ENCODE measurements at regions of chr3 and their contacts with region 1.

Region 1: GRCh38 chr3:187679638-187680396 is 9.6 kb upstream of the SST start:
- DNase-seq: peak; percentile 76 to 79
- H3K4me3 ChIP-seq: no peak overlapping the region
- H3K27ac ChIP-seq: no peak overlapping the region
- H3K4me1 ChIP-seq: no peaks in the 10 kb centered on the region
- H3K27me3 ChIP-seq: no peaks in the 10 kb centered on the region
- CTCF ChIP-seq: peak; percentile 85 to 89 (median 86)
- POLR2A ChIP-seq: no peak

Region 2: DNA sequence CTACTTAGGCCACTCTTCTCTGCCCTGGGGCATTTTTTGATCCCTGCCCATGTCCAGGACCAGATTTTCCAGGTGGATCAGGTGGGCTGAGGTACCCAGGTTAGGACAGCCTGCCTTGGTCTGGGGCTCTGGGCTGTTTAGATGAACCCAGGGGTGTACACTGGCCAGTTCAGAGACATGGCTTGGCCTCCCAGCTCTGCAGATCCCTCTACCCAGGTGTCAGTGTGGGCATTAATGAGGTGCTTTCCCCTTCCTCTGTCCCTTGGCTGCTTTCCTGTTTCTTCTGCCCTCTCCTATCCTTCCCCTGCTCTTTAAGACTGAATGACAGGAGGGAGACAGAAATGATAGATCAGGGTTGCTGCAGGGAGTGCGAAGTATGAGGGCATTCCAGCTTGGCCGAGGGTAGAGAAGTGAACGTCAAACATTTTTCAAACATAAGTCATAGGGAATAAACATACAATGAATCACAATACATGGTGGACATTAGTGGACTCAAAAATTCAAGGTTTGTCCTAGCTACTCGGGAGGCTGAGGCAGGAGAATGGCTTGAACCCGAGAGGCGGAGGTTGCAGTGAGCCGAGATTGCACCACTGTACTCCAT is 452.1 kb before region 1 on chr3:
- intact Hi-C with region 1: loop called (anchors 10 kb)
- DNase-seq: no peak
- H3K4me3 ChIP-seq: no peak overlapping the region
- H3K27ac ChIP-seq: no peak overlapping the region
- H3K4me1 ChIP-seq: no peaks in the 10 kb centered on the region
- H3K27me3 ChIP-seq: no peaks in the 10 kb centered on the region
- CTCF ChIP-seq: no peak
- POLR2A ChIP-seq: no peak

Region 3: GRCh38 chr3:187319699-187320302 is 360.0 kb before region 1 on chr3:
- intact Hi-C with region 1: loop called (anchors 10 kb)
- DNase-seq: peak; percentile 68 to 72
- H3K4me3 ChIP-seq: no peak overlapping the region
- H3K27ac ChIP-seq: peak overlapping the region in 1 of 2 donors; percentile 51
- H3K4me1 ChIP-seq: no peaks in the 10 kb centered on the region
- H3K27me3 ChIP-seq: no peaks in the 10 kb centered on the region
- CTCF ChIP-seq: peak; percentile 34 to 75 (median 64)
- POLR2A ChIP-seq: no peak

Region 4: GRCh38 chr3:187946163-187946691 is 266.4 kb after region 1 on chr3:
- intact Hi-C with region 1: no loop called
- DNase-seq: no peak
- H3K4me3 ChIP-seq: no peak overlapping the region
- H3K27ac ChIP-seq: no peak overlapping the region
- H3K4me1 ChIP-seq: no peaks in the 10 kb centered on the region
- H3K27me3 ChIP-seq: no peaks in the 10 kb centered on the region
- CTCF ChIP-seq: no peak
- POLR2A ChIP-seq: no peak